ENCODE measurements at regions of chr22 and their contacts with region 1.

Region 1: DNA sequence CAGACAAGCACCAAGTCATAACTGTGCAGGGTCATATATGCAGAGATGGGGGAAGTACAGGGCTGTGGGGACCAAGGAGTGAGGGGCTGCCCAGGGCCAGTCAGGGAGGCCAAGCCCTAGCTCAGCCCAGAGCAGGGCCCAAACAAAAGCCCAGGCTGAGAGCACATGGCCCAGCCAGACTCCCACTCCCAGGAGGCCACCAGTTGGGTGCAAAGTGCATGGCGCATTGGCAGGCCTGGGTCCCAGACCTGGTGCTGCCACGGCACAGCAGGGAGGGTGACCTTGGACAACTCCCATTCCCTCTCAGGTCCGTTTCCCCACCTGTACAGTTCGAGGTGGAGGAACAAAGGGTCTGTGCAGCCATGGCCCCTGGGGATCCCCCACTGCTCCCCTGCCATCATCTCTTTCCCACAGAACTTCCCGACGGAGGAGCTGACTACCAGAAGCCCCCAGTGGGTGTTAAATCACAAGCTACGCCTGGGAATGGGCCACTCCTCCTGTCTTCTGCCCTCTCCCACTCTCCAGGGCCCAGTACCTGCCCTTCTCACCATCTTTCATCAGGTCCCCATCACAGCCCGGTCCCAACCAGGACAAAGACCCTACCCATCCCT is 608 bp downstream of the NIPSNAP1 start:
- DNase-seq: peak; percentile 26
- ATAC-seq: no peak
- H3K4me3 ChIP-seq: peak overlapping the region; percentile 21 to 81 (median 64)
- H3K4me3 Mint-ChIP-seq: peak overlapping the region; percentile 97
- H3K27ac ChIP-seq: no peak overlapping the region
- H3K27ac Mint-ChIP-seq: peak overlapping the region; percentile 97
- H3K4me1 ChIP-seq: peaks cover 5 to 10% of the 10 kb centered on the region in 2 donors
- H3K4me1 Mint-ChIP-seq: peaks cover 17% of the 10 kb centered on the region
- H3K27me3 ChIP-seq: no peaks in the 10 kb centered on the region
- H3K27me3 Mint-ChIP-seq: no peaks in the 10 kb centered on the region
- CTCF ChIP-seq: no peak

Region 2: GRCh38 chr22:29553351-29554224 is 26.7 kb before region 1 on chr22 and contains the start of gene THOC5:
- CTCF ChIA-PET with region 1: interaction called, 4 read pairs
- POLR2A ChIA-PET with region 1: no interaction called
- intact Hi-C with region 1: loop called (anchors 1 kb)
- DNase-seq: peak; percentile 89
- ATAC-seq: peak; percentile 93
- H3K4me3 ChIP-seq: peak within 1 kb of the TSS; percentile 80 to 93 (median 92)
- H3K4me3 Mint-ChIP-seq: peak within 1 kb of the TSS; percentile 89
- H3K27ac ChIP-seq: peak within 1 kb of the TSS; percentile 66 to 79
- H3K27ac Mint-ChIP-seq: peak within 1 kb of the TSS; percentile 96
- H3K4me1 ChIP-seq: peaks cover 7 to 15% of the 10 kb centered on the region in 2 donors
- H3K4me1 Mint-ChIP-seq: peaks cover 23% of the 10 kb centered on the region
- H3K27me3 ChIP-seq: no peaks in the 10 kb centered on the region
- H3K27me3 Mint-ChIP-seq: no peaks in the 10 kb centered on the region
- CTCF ChIP-seq: no peak
- total RNA-seq, gene THOC5: 59.1 and 66.2 TPM in 2 replicates

Region 3: GRCh38 chr22:29719876-29720240 is 139.6 kb after region 1 on chr22 and contains the start of gene CABP7:
- CTCF ChIA-PET with region 1: no interaction called
- POLR2A ChIA-PET with region 1: no interaction called
- intact Hi-C with region 1: no loop called
- DNase-seq: no peak
- ATAC-seq: no peak
- H3K4me3 ChIP-seq: no peak within 1 kb of the TSS
- H3K4me3 Mint-ChIP-seq: peak within 1 kb of the TSS; percentile 47
- H3K27ac ChIP-seq: no peak within 1 kb of the TSS
- H3K27ac Mint-ChIP-seq: no peak within 1 kb of the TSS
- H3K4me1 ChIP-seq: peaks cover 7 to 8% of the 10 kb centered on the region in 2 donors
- H3K4me1 Mint-ChIP-seq: peaks cover 9% of the 10 kb centered on the region
- H3K27me3 ChIP-seq: peaks cover 0 to 47% (median 12%) of the 10 kb centered on the region in 4 experiments
- H3K27me3 Mint-ChIP-seq: peaks cover 41% of the 10 kb centered on the region
- CTCF ChIP-seq: no peak
- total RNA-seq, gene CABP7: not detected in 2 replicates

Region 4: GRCh38 chr22:29837780-29838598 is 257.7 kb after region 1 on chr22 and contains the start of gene ASCC2:
- CTCF ChIA-PET with region 1: no interaction called
- POLR2A ChIA-PET with region 1: no interaction called
- intact Hi-C with region 1: loop called (anchors 1 kb)
- DNase-seq: peak; percentile 99
- ATAC-seq: peak; percentile 100
- H3K4me3 ChIP-seq: peak within 1 kb of the TSS; percentile 75 to 96 (median 91)
- H3K4me3 Mint-ChIP-seq: peak within 1 kb of the TSS; percentile 93
- H3K27ac ChIP-seq: peak within 1 kb of the TSS; percentile 80 to 91
- H3K27ac Mint-ChIP-seq: peak within 1 kb of the TSS; percentile 96
- H3K4me1 ChIP-seq: peaks cover 15 to 19% of the 10 kb centered on the region in 2 donors
- H3K4me1 Mint-ChIP-seq: peaks cover 26% of the 10 kb centered on the region
- H3K27me3 ChIP-seq: no peaks in the 10 kb centered on the region
- H3K27me3 Mint-ChIP-seq: peaks cover 4% of the 10 kb centered on the region
- CTCF ChIP-seq: no peak
- total RNA-seq, gene ASCC2: 84.0 and 87.2 TPM in 2 replicates

Measured in B cell (primary cell).